Activated CD4-positive, alpha-beta T cell treated with anti-CD3 and anti-CD28 coated beads, Interleukin-2, amount 10 ng/mL, durations not matched to agents 24 days and 14 days (primary cell): ENCODE measurements at regions of chr3 and their contacts with region 1.

Region 1: DNA sequence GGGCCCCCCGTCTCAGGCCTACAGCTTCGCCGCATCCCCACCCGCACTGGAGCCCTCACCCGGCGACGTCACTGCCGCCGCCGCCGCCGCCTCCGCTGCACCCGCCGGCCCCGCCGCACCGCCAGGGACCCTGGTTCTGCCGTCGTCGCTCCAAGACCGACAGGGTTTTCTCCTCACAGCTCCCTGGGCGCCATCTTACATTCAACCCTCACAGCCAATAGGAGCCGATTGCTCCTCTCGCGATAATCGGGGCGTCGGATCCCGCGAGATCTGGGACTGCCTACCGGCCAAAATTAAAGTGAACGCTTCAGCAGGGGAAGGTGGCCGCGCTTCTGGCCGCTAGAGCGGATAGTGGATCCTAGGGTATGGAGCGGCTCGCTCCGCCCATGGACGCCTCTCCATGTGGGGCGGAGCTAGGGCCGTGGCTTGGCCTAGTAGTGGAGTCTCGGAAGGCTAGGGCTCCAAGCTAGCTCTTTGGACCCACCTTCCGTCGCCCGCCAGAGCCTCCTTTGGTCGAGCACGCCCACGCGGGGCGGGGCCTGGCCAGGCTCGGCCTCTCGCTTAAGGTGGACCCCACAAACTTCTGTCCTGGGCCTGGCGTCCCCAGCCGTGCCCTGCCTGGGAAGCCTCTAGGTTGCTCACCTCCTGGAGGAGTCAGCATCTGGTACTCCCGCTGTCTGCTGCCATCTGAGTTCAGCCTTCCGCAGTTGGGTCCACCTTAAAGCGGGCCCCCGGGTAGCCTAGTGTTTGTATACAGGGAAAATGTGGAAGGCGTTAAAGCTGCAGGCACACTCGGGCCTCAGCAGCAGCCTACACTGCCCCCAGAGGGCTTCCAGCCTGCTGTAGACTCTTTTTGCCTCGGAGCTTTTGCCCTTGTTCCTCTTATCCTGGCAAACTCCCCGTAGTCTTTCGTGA is at the start of gene QRICH1:
- DNase-seq: peak; percentile 99
- H3K4me3 Mint-ChIP-seq: peak within 1 kb of the TSS; percentile 96
- H3K27ac Mint-ChIP-seq: peak within 1 kb of the TSS; percentile 97
- H3K4me1 Mint-ChIP-seq: peaks cover 17% of the 10 kb centered on the region
- H3K27me3 Mint-ChIP-seq: no peaks in the 10 kb centered on the region
- total RNA-seq, gene QRICH1: 138 and 152 TPM in 2 replicates

Region 2: DNA sequence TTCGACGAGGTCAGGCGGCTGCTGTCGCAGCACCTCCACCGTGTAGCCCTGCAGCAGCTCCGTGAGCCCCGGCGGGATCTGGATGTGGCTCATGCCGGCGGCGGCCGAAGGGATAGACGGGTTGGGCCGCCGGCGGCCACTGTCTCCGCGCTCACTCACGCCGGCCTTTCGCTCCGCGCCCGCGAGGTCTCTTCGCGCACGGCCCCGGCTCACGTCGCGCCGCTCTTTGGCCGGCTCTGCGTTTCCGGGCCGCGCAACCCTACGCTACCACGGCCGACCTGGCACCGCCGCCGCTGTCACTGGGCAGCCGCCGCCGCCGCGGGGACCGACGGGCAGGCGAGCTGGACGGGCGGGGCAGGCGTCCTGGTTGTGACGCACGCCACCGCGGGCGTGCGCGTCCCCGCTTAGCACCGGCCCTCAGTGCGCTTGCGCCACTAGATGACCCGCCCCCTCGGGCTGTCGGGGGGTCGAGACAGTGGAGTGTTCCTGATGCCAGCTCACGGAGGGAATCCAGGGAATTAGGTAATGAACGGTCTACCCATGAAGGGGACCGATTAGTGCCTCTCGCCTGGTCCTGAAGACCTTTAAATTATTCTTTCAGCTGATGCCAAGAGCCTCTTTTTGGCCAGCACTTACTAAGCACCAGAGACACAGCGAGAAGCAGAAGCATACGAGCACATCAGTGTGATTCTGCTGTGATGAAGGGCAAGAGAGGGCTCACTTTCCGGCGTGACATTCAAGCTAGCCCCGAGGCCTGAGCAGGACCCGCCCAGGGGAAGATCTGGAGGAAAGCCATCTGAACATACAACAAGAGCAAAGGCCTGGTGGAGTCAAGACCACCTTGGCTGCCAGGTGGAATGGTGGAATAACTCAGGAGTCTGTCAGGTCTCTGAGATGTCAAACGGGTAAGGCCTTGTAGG is 246.3 kb before region 1 on chr3 and contains the start of gene PRKAR2A:
- intact Hi-C with region 1: loop called (anchors 2 kb)
- DNase-seq: peak; percentile 95
- H3K4me3 Mint-ChIP-seq: peak within 1 kb of the TSS; percentile 85
- H3K27ac Mint-ChIP-seq: peak within 1 kb of the TSS; percentile 90
- H3K4me1 Mint-ChIP-seq: peaks cover 19% of the 10 kb centered on the region
- H3K27me3 Mint-ChIP-seq: no peaks in the 10 kb centered on the region
- total RNA-seq, gene PRKAR2A: 31.9 and 39.4 TPM in 2 replicates

Region 3: DNA sequence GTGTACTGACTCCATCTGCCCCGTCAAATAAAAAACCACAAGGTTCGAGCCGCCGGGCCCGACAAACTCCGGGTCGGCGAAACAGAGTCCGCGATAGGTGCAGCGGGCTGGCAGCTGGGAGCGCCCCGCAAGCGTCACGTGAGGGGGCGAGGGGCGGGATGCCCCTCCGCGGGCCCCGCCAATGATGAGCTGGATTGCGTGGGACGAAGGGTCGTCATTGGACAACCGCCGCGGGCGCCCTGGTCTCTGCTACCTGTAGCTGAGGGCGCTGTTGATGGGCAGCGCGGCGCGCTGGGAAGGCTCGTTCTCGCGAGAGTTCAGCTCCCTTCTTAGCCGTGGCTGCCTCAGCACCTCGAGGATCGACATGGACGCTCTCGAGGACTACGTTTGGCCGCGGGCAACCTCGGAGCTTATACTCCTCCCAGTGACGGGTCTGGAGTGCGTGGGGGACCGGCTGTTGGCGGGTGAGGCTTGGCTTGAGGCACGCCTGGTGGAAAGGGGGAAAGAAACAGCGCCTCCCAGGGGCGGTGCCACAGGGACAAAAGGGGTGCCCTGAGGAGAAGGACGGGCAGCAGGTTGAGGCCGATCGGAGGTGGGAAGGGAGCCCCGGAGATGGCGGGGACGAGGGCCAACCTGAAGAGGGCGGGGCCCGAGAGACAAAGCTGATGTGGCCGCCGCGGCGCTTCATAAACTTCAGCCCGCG is 86.9 kb before region 1 on chr3 and contains the start of gene WDR6:
- intact Hi-C with region 1: loop called (anchors 1 kb)
- DNase-seq: peak; percentile 99
- H3K4me3 Mint-ChIP-seq: peak within 1 kb of the TSS; percentile 94
- H3K27ac Mint-ChIP-seq: peak within 1 kb of the TSS; percentile 99
- H3K4me1 Mint-ChIP-seq: peaks cover 27% of the 10 kb centered on the region
- H3K27me3 Mint-ChIP-seq: no peaks in the 10 kb centered on the region
- total RNA-seq, gene WDR6: 141 and 153 TPM in 2 replicates

Region 4: GRCh38 chr3:49104483-49105291 is 10.6 kb after region 1 on chr3 and contains the start of gene QARS1:
- intact Hi-C with region 1: loop called (anchors 1 kb)
- DNase-seq: peak; percentile 97
- H3K4me3 Mint-ChIP-seq: peak within 1 kb of the TSS; percentile 99
- H3K27ac Mint-ChIP-seq: peak within 1 kb of the TSS; percentile 96
- H3K4me1 Mint-ChIP-seq: peaks cover 18% of the 10 kb centered on the region
- H3K27me3 Mint-ChIP-seq: no peaks in the 10 kb centered on the region
- total RNA-seq, gene QARS1: 188 and 192 TPM in 2 replicates

Region 5: GRCh38 chr3:49199239-49199899 is 105.3 kb after region 1 on chr3:
- intact Hi-C with region 1: no loop called
- DNase-seq: peak; percentile 59
- H3K4me3 Mint-ChIP-seq: no peak overlapping the region
- H3K27ac Mint-ChIP-seq: no peak overlapping the region
- H3K4me1 Mint-ChIP-seq: no peaks in the 10 kb centered on the region
- H3K27me3 Mint-ChIP-seq: peaks cover 8% of the 10 kb centered on the region

Region 6: GRCh38 chr3:49339945-49340800 is 246.1 kb after region 1 on chr3 and contains the start of gene USP4:
- intact Hi-C with region 1: loop called (anchors 1 kb)
- DNase-seq: peak; percentile 98
- H3K4me3 Mint-ChIP-seq: peak within 1 kb of the TSS; percentile 97
- H3K27ac Mint-ChIP-seq: peak within 1 kb of the TSS; percentile 98
- H3K4me1 Mint-ChIP-seq: peaks cover 43% of the 10 kb centered on the region
- H3K27me3 Mint-ChIP-seq: no peaks in the 10 kb centered on the region
- total RNA-seq, gene USP4: 94.0 and 96.9 TPM in 2 replicates

Region 7: DNA sequence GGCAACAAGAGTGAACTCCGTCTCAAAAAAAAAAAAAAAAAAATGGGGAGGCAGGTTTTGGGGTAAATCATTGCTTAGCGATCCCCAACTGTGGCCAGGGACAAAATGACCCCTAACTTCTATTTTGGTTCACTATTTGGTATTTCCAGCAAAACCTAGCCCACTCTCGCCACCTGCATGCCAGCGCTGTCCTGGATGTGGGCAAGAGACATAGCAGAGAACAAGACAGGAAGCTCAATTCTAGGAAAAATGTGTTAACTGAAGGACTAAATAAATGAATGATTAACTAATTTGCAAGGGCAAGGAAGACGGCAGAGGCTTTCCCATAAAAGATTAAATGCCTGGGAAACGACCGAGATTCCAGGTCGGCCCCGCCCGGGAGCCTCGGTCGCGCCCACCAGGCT is 334.6 kb after region 1 on chr3:
- intact Hi-C with region 1: loop called (anchors 5 kb)
- DNase-seq: no peak
- H3K4me3 Mint-ChIP-seq: peak overlapping the region; percentile 93
- H3K27ac Mint-ChIP-seq: peak overlapping the region; percentile 94
- H3K4me1 Mint-ChIP-seq: peaks cover 8% of the 10 kb centered on the region
- H3K27me3 Mint-ChIP-seq: no peaks in the 10 kb centered on the region

Region 8: DNA sequence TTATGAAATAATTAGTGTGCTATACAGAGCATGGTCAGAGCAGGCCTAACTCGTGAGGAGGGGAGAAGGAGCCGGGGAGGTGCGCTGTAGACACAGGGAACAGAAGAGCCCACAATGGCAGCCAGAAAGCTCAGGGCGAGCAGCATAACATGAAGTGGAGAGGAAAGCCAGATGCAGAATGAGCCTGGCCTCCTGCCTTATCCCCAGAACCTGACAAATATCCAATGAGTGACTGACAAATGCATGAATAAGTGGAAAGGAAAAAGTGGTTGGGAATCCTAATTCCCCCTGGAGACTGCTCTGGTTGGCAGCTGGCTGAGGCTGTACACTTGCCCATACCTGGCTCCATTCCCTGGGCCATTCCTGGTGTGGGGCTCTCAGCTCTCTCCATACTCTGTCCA is 818.8 kb after region 1 on chr3:
- intact Hi-C with region 1: no loop called
- DNase-seq: no peak
- H3K4me3 Mint-ChIP-seq: no peak overlapping the region
- H3K27ac Mint-ChIP-seq: no peak overlapping the region
- H3K4me1 Mint-ChIP-seq: no peaks in the 10 kb centered on the region
- H3K27me3 Mint-ChIP-seq: no peaks in the 10 kb centered on the region